CD8-positive, alpha-beta T cell (primary cell): ENCODE measurements at regions of chr20 and their contacts with region 1.

Region 1: DNA sequence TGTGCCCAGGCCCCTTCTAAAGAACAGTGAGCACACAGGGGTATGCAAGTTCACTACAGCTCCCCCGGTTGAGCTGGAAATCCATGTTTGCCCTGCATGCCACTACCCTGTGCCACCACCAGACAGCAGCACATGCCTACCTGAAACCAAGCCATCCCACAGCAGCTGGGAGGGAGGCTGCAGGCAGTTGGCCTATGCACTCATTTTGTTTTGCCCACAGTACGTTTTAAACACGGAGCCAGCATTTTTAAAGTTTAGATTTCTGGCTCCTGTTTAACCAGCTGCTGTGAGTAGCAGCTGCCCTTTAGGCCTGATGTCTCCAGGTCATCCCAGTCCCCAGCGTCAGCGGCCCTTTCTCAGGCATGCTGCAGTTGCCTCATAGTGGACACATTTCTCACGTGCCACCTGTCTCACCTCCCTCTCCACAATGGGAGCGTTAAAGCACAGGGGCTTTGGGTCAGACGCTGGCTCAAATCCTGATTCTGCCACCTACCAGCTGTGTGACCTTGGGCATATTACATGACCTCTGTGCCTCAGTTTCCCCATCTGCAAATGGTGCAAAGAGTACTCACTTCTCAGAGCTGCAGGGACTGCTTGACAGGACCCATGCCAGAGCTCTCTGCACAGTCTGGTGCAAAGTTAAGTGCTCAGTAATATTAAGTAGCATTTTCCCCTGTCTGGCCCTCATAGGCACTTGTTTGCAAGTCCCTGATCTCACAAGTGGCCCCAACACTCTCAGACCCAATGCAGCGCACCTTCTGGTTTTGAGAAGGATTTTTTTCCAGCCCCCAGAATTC is 8.1 kb upstream of the UBE2V1 start:
- DNase-seq: peak; percentile 39 to 81 (median 65)
- ATAC-seq: peak; percentile 86
- H3K4me3 ChIP-seq: no peak overlapping the region
- H3K4me3 Mint-ChIP-seq: no peak overlapping the region
- H3K27ac ChIP-seq: no peak overlapping the region
- H3K27ac Mint-ChIP-seq: no peak overlapping the region
- H3K4me1 ChIP-seq: peaks cover 8% of the 10 kb centered on the region
- H3K4me1 Mint-ChIP-seq: peaks cover 8% of the 10 kb centered on the region
- H3K27me3 ChIP-seq: no peaks in the 10 kb centered on the region
- H3K27me3 Mint-ChIP-seq: no peaks in the 10 kb centered on the region
- CTCF ChIP-seq: peak; percentile 76

Region 2: DNA sequence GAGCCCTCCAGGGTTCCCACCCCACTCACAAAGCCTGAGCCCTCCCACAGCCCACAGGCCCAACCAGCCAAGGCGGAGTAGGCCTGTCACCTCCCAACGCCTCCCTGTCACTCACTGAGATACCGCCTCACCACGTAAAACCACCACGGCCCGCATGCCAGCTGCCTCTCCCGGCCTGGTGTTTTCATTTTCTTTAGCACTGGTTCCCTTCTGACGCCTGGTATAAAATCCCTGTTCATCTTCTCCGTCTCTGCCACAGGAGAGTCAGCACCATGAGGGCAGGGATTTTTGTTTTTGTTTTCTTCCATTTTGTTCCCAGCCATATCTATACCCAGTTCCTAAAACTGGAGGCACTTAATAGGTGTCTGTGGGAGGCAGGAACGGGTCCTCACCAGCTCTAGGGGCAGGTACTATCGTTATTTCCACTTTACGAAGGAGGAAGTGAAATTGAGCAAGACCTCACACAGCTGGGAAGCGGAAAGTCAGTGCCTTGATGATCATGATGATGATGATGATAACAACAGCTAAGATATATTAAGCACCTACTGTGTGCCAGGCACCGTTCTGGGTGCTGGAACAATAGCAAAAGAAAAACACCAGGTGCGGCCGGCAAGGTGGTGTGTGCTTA is 79.7 kb before region 1 on chr20:
- CTCF ChIA-PET with region 1: no interaction called
- POLR2A ChIA-PET with region 1: no interaction called
- intact Hi-C with region 1: no loop called
- DNase-seq: peak in 1 of 9 experiments; percentile 14
- ATAC-seq: no peak
- H3K4me3 ChIP-seq: no peak overlapping the region
- H3K4me3 Mint-ChIP-seq: no peak overlapping the region
- H3K27ac ChIP-seq: no peak overlapping the region
- H3K27ac Mint-ChIP-seq: peak overlapping the region; percentile 19
- H3K4me1 ChIP-seq: no peaks in the 10 kb centered on the region
- H3K4me1 Mint-ChIP-seq: no peaks in the 10 kb centered on the region
- H3K27me3 ChIP-seq: no peaks in the 10 kb centered on the region
- H3K27me3 Mint-ChIP-seq: peaks cover 6% of the 10 kb centered on the region
- CTCF ChIP-seq: no peak

Region 3: GRCh38 chr20:50133474-50134217 is 12.6 kb after region 1 on chr20:
- CTCF ChIA-PET with region 1: interaction called, 24 read pairs
- POLR2A ChIA-PET with region 1: interaction called, 3 read pairs
- intact Hi-C with region 1: no loop called
- DNase-seq: no peak
- ATAC-seq: no peak
- H3K4me3 ChIP-seq: no peak overlapping the region
- H3K4me3 Mint-ChIP-seq: no peak overlapping the region
- H3K27ac ChIP-seq: no peak overlapping the region
- H3K27ac Mint-ChIP-seq: peak overlapping the region; percentile 6
- H3K4me1 ChIP-seq: no peaks in the 10 kb centered on the region
- H3K4me1 Mint-ChIP-seq: peaks cover 5% of the 10 kb centered on the region
- H3K27me3 ChIP-seq: no peaks in the 10 kb centered on the region
- H3K27me3 Mint-ChIP-seq: no peaks in the 10 kb centered on the region
- CTCF ChIP-seq: no peak

Region 4: DNA sequence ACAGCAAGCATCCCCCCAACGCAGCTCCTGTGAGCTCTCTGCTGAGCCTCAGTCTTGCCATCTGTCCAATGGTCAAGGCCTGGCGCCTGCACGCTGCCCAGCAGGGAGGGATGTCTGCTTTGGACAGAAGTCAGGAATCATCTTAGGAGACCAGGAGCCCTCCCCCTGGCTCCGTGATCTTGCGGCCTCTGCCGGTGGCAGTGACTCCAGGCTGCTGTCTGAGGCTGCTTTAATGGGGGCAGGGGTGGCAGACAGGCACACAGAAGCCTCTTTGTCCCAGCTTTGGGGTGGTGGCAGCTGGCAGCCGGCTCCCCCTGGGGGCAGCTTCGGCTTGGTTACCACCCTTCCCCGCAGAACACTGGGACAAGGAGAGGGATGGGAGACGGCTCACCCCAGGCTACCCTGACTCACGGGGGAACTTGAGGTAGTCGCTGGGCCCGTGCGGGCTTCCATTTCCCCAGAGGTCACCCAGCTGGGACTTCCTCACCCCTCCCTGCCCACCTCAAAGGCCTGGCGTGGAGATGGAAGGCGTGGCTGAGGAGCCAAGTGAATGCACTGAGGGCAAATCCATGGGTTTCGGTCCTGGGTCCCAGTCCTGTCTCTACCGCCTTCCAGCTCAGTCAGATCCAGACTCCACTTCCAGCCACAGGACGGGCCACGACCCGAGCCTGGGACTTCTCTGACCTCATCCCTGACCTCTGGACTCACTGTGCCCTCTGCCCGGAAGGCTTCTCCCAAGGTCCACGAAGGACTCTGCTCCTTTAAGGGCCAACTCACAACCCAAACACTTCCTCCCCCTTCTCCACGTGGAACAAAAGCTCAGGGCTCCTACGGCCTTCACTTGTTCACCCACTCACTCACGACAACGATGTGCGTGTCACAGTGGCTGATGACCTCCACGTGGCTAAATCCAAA is 17.6 kb after region 1 on chr20:
- CTCF ChIA-PET with region 1: interaction called, 24 read pairs
- POLR2A ChIA-PET with region 1: interaction called, 4 read pairs
- intact Hi-C with region 1: no loop called
- DNase-seq: no peak
- ATAC-seq: no peak
- H3K4me3 ChIP-seq: no peak overlapping the region
- H3K4me3 Mint-ChIP-seq: no peak overlapping the region
- H3K27ac ChIP-seq: no peak overlapping the region
- H3K27ac Mint-ChIP-seq: no peak overlapping the region
- H3K4me1 ChIP-seq: no peaks in the 10 kb centered on the region
- H3K4me1 Mint-ChIP-seq: peaks cover 19% of the 10 kb centered on the region
- H3K27me3 ChIP-seq: no peaks in the 10 kb centered on the region
- H3K27me3 Mint-ChIP-seq: no peaks in the 10 kb centered on the region
- CTCF ChIP-seq: no peak

Region 5: GRCh38 chr20:50146732-50147662 is 25.9 kb after region 1 on chr20:
- CTCF ChIA-PET with region 1: interaction called, 59 read pairs
- POLR2A ChIA-PET with region 1: interaction called, 10 read pairs
- intact Hi-C with region 1: loop called in 1 of 2 experiments (anchors 2 kb)
- DNase-seq: peak; percentile 55 to 94 (median 79)
- ATAC-seq: peak; percentile 100
- H3K4me3 ChIP-seq: peak overlapping the region; percentile 32 to 34
- H3K4me3 Mint-ChIP-seq: peak overlapping the region; percentile 79
- H3K27ac ChIP-seq: peak overlapping the region; percentile 87 to 93
- H3K27ac Mint-ChIP-seq: peak overlapping the region; percentile 97
- H3K4me1 ChIP-seq: peaks cover 48% of the 10 kb centered on the region
- H3K4me1 Mint-ChIP-seq: peaks cover 65% of the 10 kb centered on the region
- H3K27me3 ChIP-seq: no peaks in the 10 kb centered on the region
- H3K27me3 Mint-ChIP-seq: no peaks in the 10 kb centered on the region
- CTCF ChIP-seq: no peak

Region 6: DNA sequence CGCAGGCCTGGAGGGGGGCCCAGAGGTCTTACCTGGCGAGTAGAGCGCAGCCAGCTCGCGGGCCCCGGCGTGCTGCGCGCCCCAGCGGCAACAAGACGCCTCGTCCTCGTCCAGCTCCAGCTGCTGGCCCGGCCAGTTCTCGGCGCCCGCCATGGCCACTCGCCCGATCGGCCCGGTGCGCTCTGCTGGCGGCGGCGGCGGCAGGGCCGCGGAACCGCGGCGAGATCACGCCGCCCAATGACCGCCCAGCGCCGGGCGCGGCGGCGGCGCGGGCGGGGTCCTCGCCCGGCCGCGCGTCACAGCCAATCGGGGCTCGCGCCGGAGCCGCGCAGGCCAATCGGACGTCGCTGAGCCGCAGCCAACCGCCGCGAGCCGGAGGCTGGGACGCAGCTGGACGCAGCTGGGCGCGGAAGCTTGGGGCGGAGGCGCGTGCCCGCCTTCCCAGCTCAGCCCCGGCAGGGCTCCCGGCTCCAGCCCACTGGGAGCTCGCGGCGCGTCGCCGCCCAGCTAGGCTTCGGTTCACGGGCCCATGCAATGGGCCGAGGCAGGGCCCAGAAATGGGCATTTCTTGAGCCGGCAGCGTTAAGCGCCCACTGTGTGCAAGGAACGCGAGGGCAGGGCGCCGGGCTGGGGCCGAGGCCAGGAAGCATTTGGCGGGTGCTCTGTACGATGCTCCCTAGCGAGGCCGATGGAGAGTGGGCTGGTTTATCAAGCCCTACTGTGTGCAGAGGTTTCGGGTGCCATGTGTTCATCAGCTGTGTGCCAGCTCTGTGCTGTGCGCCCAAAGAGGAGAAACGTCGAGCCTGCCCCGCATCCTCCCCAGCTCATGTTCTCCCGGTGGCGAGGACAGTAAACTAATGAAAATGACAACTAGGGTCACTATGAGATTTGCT is 32.6 kb after region 1 on chr20 and contains the start of gene PEDS1:
- CTCF ChIA-PET with region 1: interaction called, 59 read pairs
- POLR2A ChIA-PET with region 1: interaction called, 20 read pairs
- intact Hi-C with region 1: no loop called
- DNase-seq: peak; percentile 55 to 92 (median 80)
- ATAC-seq: peak; percentile 93
- H3K4me3 ChIP-seq: peak within 1 kb of the TSS; percentile 89 to 92
- H3K4me3 Mint-ChIP-seq: peak within 1 kb of the TSS; percentile 90
- H3K27ac ChIP-seq: peak within 1 kb of the TSS; percentile 77 to 78
- H3K27ac Mint-ChIP-seq: peak within 1 kb of the TSS; percentile 91
- H3K4me1 ChIP-seq: peaks cover 36% of the 10 kb centered on the region
- H3K4me1 Mint-ChIP-seq: peaks cover 43% of the 10 kb centered on the region
- H3K27me3 ChIP-seq: no peaks in the 10 kb centered on the region
- H3K27me3 Mint-ChIP-seq: no peaks in the 10 kb centered on the region
- CTCF ChIP-seq: no peak
- total RNA-seq, gene PEDS1: 19.0 to 20.8 TPM

Region 7: GRCh38 chr20:50179507-50180016 is 58.5 kb after region 1 on chr20:
- CTCF ChIA-PET with region 1: interaction called, 125 read pairs
- POLR2A ChIA-PET with region 1: no interaction called
- intact Hi-C with region 1: loop called (anchors 1 to 2 kb)
- DNase-seq: no peak
- ATAC-seq: peak; percentile 24
- H3K4me3 ChIP-seq: no peak overlapping the region
- H3K4me3 Mint-ChIP-seq: no peak overlapping the region
- H3K27ac ChIP-seq: no peak overlapping the region
- H3K27ac Mint-ChIP-seq: no peak overlapping the region
- H3K4me1 ChIP-seq: no peaks in the 10 kb centered on the region
- H3K4me1 Mint-ChIP-seq: no peaks in the 10 kb centered on the region
- H3K27me3 ChIP-seq: no peaks in the 10 kb centered on the region
- H3K27me3 Mint-ChIP-seq: peaks cover 7% of the 10 kb centered on the region
- CTCF ChIP-seq: peak; percentile 58

Region 8: DNA sequence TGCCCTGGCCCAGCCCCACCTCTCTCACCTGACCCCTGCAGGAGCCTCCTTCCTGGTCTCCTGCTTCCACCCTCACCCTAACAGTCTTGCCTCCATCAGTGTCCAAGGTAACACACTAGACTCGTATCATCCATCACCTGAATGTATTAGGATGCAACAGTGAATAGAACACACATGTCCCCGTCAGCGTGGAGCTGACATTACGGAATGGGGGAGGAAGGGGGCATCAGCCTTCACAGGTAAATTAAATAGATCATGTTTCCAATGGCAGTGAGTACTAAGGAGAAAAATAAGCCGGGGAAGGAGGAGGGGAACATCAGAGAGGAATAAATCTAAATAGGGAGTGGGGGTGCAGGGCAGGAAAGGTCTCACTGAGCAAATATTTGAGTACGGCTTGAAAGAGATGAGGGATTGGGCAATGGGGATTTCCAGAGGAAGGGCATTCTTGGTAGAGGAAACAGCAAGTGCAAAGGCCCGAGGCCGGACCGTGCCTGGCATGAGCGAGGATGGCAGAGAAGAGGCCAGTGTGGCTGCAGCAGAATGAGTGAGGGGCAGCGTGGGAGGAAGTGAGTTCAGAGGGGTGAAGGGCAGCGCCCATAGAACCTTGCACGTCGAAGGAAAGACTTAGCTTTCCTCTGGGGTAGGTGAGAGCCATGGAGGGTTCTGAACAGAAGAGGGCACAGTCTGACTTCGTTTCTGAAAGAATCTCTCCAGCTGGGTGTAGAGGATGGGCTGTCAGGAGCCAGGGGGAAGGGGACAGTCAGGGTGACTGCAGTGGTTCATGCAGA is 279.0 kb after region 1 on chr20:
- CTCF ChIA-PET with region 1: no interaction called
- POLR2A ChIA-PET with region 1: no interaction called
- intact Hi-C with region 1: no loop called
- DNase-seq: no peak
- ATAC-seq: no peak
- H3K4me3 ChIP-seq: no peak overlapping the region
- H3K4me3 Mint-ChIP-seq: no peak overlapping the region
- H3K27ac ChIP-seq: no peak overlapping the region
- H3K27ac Mint-ChIP-seq: no peak overlapping the region
- H3K4me1 ChIP-seq: no peaks in the 10 kb centered on the region
- H3K4me1 Mint-ChIP-seq: no peaks in the 10 kb centered on the region
- H3K27me3 ChIP-seq: no peaks in the 10 kb centered on the region
- H3K27me3 Mint-ChIP-seq: peaks cover under 1% of the 10 kb centered on the region
- CTCF ChIP-seq: no peak

Region 9: DNA sequence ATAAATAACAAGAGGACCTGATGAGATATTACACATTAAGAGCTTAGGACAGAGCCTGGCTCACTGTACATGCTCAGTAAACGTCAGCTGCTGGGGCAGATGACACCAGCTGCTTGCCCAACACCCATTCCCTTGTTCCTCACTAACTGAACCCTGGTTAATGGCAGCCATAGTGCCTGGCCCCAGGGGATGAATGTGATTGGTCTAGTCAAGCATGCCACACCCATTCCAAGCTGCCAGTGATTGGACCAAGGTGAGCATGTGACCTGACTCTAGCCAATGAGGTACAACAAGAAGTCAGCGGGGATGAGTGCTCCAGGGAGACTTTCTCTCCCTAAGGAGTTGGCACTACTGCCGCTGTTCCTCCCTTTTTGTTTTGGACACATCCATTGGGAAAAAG is 304.0 kb after region 1 on chr20:
- CTCF ChIA-PET with region 1: no interaction called
- POLR2A ChIA-PET with region 1: no interaction called
- intact Hi-C with region 1: no loop called
- DNase-seq: peak in 1 of 9 experiments; percentile 8
- ATAC-seq: no peak
- H3K4me3 ChIP-seq: no peak overlapping the region
- H3K4me3 Mint-ChIP-seq: no peak overlapping the region
- H3K27ac ChIP-seq: no peak overlapping the region
- H3K27ac Mint-ChIP-seq: no peak overlapping the region
- H3K4me1 ChIP-seq: no peaks in the 10 kb centered on the region
- H3K4me1 Mint-ChIP-seq: no peaks in the 10 kb centered on the region
- H3K27me3 ChIP-seq: no peaks in the 10 kb centered on the region
- H3K27me3 Mint-ChIP-seq: peaks cover 5% of the 10 kb centered on the region
- CTCF ChIP-seq: no peak

Region 10: DNA sequence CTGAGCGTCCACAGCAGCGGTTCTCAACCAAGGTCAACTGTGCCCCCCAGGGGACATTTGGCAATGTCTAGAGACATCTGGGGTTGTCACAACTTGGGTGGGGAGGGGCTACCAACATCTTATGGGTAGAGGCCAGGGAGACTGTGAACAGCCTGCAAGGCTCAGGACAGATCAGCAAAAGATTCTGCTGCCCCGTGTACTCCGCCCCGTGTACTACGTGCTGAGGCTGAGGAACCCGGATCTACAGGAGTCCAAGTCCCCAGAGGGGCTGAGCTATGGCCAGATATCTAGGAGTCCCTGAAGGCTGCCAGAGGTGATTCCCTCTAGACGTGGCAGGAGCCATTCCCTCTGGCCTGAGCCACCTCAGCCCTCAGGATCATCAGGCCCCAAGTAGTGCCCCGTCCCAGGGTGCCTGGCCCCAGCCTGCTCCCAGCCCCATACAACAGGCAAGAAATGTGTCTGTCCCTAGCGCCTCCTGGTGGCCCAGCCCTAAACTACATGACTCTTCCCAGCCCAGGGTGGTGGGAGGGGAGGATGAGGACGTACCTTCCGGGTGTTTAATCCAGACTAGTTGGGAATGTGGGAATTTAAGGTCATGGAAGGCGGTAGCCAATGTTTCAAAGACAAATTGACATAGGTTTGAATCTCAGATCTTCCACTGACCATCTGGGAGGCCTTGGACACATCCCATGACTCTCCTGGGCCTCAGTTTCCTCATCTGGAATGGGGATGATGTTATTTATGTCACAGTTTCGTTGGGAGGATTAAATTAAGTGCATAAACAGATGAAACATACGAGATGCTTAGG is 339.6 kb after region 1 on chr20:
- CTCF ChIA-PET with region 1: interaction called, 17 read pairs
- POLR2A ChIA-PET with region 1: no interaction called
- intact Hi-C with region 1: loop called (anchors 5 kb)
- DNase-seq: peak; percentile 65 to 85 (median 81)
- ATAC-seq: peak; percentile 91
- H3K4me3 ChIP-seq: no peak overlapping the region
- H3K4me3 Mint-ChIP-seq: no peak overlapping the region
- H3K27ac ChIP-seq: no peak overlapping the region
- H3K27ac Mint-ChIP-seq: no peak overlapping the region
- H3K4me1 ChIP-seq: peaks cover 3% of the 10 kb centered on the region
- H3K4me1 Mint-ChIP-seq: peaks cover 4% of the 10 kb centered on the region
- H3K27me3 ChIP-seq: peaks cover 0 to 5% of the 10 kb centered on the region in 2 experiments
- H3K27me3 Mint-ChIP-seq: peaks cover 12% of the 10 kb centered on the region
- CTCF ChIP-seq: peak; percentile 72